WTC11 (cell line): ENCODE measurements at regions of chr2 and their contacts with region 1.

Region 1: DNA sequence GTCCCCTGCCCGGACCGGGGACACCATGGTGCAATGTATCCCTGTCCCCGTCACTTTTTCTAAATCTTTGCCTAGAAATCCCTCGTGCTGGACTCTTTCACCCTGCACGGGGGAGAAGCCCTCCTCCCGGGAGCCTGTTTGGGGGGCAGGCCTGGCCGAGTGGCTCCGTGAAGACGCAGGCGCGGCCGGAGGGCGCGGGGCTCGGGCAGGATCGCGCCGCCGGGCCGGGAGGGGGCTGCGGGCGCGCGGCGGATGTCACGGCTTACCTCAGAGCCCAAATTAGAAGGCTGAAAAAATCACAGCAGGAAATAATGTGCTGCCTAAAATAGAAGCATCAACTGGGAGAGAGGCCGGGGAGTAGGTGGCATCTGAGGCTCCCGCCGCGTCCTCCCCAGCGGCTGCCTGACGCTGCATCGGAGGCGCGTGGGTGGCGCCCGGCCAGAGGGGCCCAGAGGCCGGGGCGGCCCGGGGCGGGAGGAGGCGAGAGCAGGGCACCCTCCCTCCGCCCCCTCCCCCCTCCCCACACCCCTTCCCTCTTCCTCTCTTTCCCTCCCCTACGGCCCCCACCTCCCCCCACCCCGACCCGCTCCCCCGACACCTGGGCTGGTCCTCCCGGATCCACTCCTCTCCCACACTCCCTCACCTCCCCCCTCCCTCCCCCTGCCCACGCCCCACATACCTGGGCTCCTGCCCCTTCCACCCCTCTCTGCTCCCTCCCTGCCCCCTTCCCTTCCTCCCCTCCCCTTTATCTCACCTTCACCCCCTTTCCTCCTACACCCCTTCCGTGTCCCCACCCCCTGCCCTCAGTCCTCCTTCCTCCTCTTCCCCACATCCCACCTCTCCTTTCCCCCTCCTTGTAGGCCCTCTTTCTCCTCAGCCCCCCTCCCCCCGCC is 51.9 kb downstream of the SLC4A1AP start:
- DNase-seq: peak; percentile 35
- ATAC-seq: peak; percentile 20
- H3K4me3 Mint-ChIP-seq: peak overlapping the region; percentile 81
- H3K27ac Mint-ChIP-seq: no peak overlapping the region
- H3K4me1 Mint-ChIP-seq: peaks cover 18% of the 10 kb centered on the region
- H3K27me3 Mint-ChIP-seq: peaks cover 17% of the 10 kb centered on the region
- CTCF ChIP-seq: no peak

Region 2: GRCh38 chr2:27703638-27704341 is 11.8 kb before region 1 on chr2:
- CTCF ChIA-PET with region 1: interaction called, 16 read pairs
- POLR2A ChIA-PET with region 1: interaction called, 5 read pairs
- DNase-seq: peak; percentile 92
- ATAC-seq: peak; percentile 86
- H3K4me3 Mint-ChIP-seq: no peak overlapping the region
- H3K27ac Mint-ChIP-seq: no peak overlapping the region
- H3K4me1 Mint-ChIP-seq: no peaks in the 10 kb centered on the region; the same call in 1 of the 2 replicates
- H3K27me3 Mint-ChIP-seq: no peaks in the 10 kb centered on the region
- CTCF ChIP-seq: peak; percentile 88

Region 3: GRCh38 chr2:27742571-27742970 is 27.0 kb after region 1 on chr2:
- CTCF ChIA-PET with region 1: no interaction called
- POLR2A ChIA-PET with region 1: no interaction called
- DNase-seq: no peak
- ATAC-seq: no peak
- H3K4me3 Mint-ChIP-seq: no peak overlapping the region
- H3K27ac Mint-ChIP-seq: no peak overlapping the region
- H3K4me1 Mint-ChIP-seq: 0 out of 2 replicates have a peak, but pooled peaks cover 3% of the 10 kb centered on the region
- H3K27me3 Mint-ChIP-seq: peaks cover 15% of the 10 kb centered on the region
- CTCF ChIP-seq: no peak